HepG2 (cell line): ENCODE measurements at regions of chr21 and their contacts with region 1.

Region 1: DNA sequence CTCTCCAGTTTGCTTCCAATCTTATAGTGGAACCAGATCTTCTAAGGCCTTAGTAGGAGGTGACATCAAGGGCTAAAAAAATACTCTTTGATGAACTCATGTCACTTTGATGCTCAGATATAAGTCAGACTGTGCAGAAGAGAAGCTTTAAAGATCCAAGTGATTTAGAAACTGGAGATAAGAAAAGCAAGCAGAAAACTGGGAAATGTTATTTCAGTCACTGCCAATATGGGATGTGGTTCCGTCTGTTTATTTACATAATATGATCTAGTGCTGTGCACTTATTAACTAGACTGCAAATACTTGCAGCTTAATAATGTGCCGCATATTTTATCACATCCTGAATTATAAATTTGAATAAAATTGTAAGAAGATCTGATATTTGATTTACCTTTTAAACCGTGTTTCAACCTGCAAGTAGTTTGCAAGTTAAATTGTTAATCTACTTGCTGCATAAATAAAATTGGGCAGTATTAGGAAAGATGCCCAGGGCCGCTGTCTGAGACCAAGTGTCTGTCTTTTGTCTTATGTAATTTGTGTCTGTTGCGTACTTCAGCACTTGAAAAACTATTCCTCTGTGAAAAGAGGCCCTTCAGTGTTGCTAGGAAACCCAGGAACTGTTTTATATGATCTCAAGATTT is 29.6 kb downstream of the CXADR start:
- DNase-seq: peak; percentile 94
- ATAC-seq: peak; percentile 91
- H3K4me3 ChIP-seq: no peak overlapping the region; a peak in 1 of 6 replicates
- H3K27ac ChIP-seq: peak overlapping the region; percentile 58
- H3K4me1 ChIP-seq: peaks cover 92% of the 10 kb centered on the region
- H3K27me3 ChIP-seq: no peaks in the 10 kb centered on the region
- CTCF ChIP-seq: no peak
- EP300 ChIP-seq: peak in 1 of 2 experiments; percentile 97; a peak in 2 of 4 replicates
- POLR2A ChIP-seq: no peak
- RAD21 ChIP-seq: no peak

Region 2: GRCh38 chr21:17461014-17461413 is 81.5 kb before region 1 on chr21:
- CTCF ChIA-PET with region 1: no interaction called
- POLR2A ChIA-PET with region 1: interaction called, 3 read pairs
- in situ Hi-C with region 1: no loop called
- intact Hi-C with region 1: loop called (anchors 1 kb)
- DNase-seq: no peak
- ATAC-seq: no peak
- H3K4me3 ChIP-seq: no peak overlapping the region
- H3K27ac ChIP-seq: peak overlapping the region; percentile 80
- H3K4me1 ChIP-seq: peaks cover 45% of the 10 kb centered on the region
- H3K27me3 ChIP-seq: no peaks in the 10 kb centered on the region
- CTCF ChIP-seq: no peak
- EP300 ChIP-seq: no peak
- POLR2A ChIP-seq: no peak
- RAD21 ChIP-seq: no peak

Region 3: GRCh38 chr21:17527240-17527639 is 15.3 kb before region 1 on chr21:
- CTCF ChIA-PET with region 1: no interaction called
- POLR2A ChIA-PET with region 1: interaction called, 11 read pairs
- in situ Hi-C with region 1: no loop called
- intact Hi-C with region 1: loop called (anchors 1 kb)
- DNase-seq: peak; percentile 83
- ATAC-seq: peak; percentile 36
- H3K4me3 ChIP-seq: no peak overlapping the region
- H3K27ac ChIP-seq: peak overlapping the region; percentile 58
- H3K4me1 ChIP-seq: peaks cover 98% of the 10 kb centered on the region
- H3K27me3 ChIP-seq: no peaks in the 10 kb centered on the region
- CTCF ChIP-seq: no peak
- EP300 ChIP-seq: peak in 1 of 2 experiments; percentile 69; a peak in 2 of 4 replicates
- POLR2A ChIP-seq: no peak
- RAD21 ChIP-seq: no peak